Activated CD4-positive, alpha-beta T cell treated with anti-CD3 and anti-CD28 coated beads for 36 hours (primary cell): ENCODE measurements at regions of chr7 and their contacts with region 1.

Region 1: GRCh38 chr7:107879400-107880035 is 11.5 kb upstream of the DLD start:
- DNase-seq: peak; percentile 51
- ATAC-seq: peak; percentile 71
- H3K4me3 Mint-ChIP-seq: no peak overlapping the region
- H3K27ac Mint-ChIP-seq: no peak overlapping the region
- H3K4me1 Mint-ChIP-seq: peaks cover 28% of the 10 kb centered on the region
- H3K27me3 Mint-ChIP-seq: peaks cover 5% of the 10 kb centered on the region

Region 2: DNA sequence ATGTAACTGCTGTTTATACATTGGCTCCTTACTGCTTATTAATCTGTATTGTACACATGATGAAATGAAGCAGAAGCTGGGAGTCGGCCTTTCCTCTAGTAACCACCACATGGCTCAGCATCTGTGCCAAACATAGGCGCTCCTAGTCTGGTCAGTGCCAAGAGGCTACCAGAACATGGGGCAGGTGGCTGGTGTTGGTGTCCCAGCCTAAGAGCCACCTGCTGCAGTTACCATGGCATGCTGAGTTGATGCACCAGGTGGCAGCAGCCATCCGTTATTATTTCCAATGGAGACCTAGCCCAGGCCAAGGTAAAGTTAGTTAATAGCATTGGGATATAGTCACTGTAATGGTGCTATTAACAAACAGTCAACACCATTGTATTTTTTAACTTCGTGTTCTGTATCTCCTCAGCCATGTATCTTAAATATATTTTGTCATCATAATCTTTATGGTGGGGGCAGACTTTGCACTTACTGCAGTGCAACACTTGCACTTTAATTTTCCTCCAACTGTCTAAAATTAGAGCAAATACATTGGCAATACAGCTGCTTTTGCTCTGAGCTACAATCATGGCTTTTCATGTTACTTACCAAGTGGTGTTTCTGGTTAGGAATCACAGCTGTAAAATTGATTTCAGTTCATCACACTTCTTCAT is 677.6 kb before region 1 on chr7:
- CTCF ChIA-PET with region 1: no interaction called
- POLR2A ChIA-PET with region 1: no interaction called
- intact Hi-C with region 1: loop called in 1 of 2 experiments (anchors 5 kb)
- DNase-seq: peak; percentile 61
- ATAC-seq: peak; percentile 78
- H3K4me3 Mint-ChIP-seq: no peak overlapping the region
- H3K27ac Mint-ChIP-seq: no peak overlapping the region
- H3K4me1 Mint-ChIP-seq: no peaks in the 10 kb centered on the region
- H3K27me3 Mint-ChIP-seq: no peaks in the 10 kb centered on the region

Region 3: DNA sequence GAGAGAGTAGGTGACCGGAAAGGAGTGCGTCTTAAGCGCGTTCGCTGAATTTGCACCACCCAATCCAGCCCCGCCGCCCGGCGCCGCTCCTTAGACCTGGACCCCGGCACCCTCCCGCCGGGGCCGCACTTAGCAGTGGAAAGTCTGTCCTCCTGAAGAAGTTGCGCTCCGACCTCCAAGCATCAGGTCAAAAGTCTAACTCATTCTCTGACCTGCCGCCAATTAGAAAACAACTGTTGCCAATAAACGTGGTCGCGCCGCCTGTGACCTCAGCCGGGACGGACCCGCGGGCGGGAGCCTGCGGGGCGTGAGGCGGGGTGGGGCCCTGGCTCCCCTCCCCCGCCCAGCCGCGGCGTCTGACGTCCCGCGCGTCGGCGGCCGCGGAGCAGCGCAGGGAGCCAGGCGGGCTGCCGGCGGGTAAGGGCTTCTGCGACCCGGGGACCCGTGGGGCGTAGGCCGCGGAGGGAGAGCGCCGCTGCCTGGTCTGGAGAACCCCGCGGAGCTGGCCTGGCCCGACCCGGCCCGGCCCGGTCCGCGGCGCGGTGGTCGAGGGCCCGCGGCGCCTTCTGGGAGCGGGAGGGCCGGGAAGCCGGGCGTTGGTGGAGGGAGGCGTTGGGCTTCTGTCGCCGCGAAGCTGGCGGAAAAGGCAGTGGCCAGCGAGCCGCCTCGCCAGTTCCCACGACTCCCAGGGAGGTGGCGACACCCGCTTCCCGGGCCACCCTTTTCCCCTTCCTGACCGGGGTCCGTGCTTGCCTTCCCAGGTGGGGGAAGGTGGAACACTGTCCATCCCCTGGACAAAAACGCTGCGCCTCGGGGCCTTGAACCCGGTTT is 299.4 kb before region 1 on chr7 and contains the start of gene BCAP29:
- CTCF ChIA-PET with region 1: no interaction called
- POLR2A ChIA-PET with region 1: no interaction called
- intact Hi-C with region 1: loop called in 1 of 2 experiments (anchors 2 kb)
- DNase-seq: peak; percentile 83
- ATAC-seq: peak; percentile 96
- H3K4me3 Mint-ChIP-seq: peak within 1 kb of the TSS; percentile 84
- H3K27ac Mint-ChIP-seq: peak within 1 kb of the TSS; percentile 88
- H3K4me1 Mint-ChIP-seq: peaks cover 18% of the 10 kb centered on the region
- H3K27me3 Mint-ChIP-seq: no peaks in the 10 kb centered on the region
- total RNA-seq, gene BCAP29: 31.4 to 38.8 TPM

Region 4: GRCh38 chr7:107743567-107744344 is 135.8 kb before region 1 on chr7 and contains the start of gene CBLL1:
- CTCF ChIA-PET with region 1: interaction called, 120 read pairs
- POLR2A ChIA-PET with region 1: interaction called, 9 read pairs
- intact Hi-C with region 1: loop called (anchors 1 kb)
- DNase-seq: peak; percentile 99
- ATAC-seq: peak; percentile 94
- H3K4me3 Mint-ChIP-seq: peak within 1 kb of the TSS; percentile 88
- H3K27ac Mint-ChIP-seq: peak within 1 kb of the TSS; percentile 100
- H3K4me1 Mint-ChIP-seq: peaks cover 44% of the 10 kb centered on the region
- H3K27me3 Mint-ChIP-seq: no peaks in the 10 kb centered on the region
- total RNA-seq, gene CBLL1: 36.9 to 57.9 TPM

Region 5: GRCh38 chr7:107865956-107866775 is 13.4 kb before region 1 on chr7:
- CTCF ChIA-PET with region 1: interaction called, 27 read pairs
- POLR2A ChIA-PET with region 1: no interaction called
- intact Hi-C with region 1: no loop called
- DNase-seq: peak; percentile 55
- ATAC-seq: peak; percentile 79
- H3K4me3 Mint-ChIP-seq: peak overlapping the region; percentile 34
- H3K27ac Mint-ChIP-seq: peak overlapping the region; percentile 83
- H3K4me1 Mint-ChIP-seq: peaks cover 24% of the 10 kb centered on the region
- H3K27me3 Mint-ChIP-seq: no peaks in the 10 kb centered on the region